ENCODE measurements at regions of chr17 and their contacts with region 1.

Region 1: DNA sequence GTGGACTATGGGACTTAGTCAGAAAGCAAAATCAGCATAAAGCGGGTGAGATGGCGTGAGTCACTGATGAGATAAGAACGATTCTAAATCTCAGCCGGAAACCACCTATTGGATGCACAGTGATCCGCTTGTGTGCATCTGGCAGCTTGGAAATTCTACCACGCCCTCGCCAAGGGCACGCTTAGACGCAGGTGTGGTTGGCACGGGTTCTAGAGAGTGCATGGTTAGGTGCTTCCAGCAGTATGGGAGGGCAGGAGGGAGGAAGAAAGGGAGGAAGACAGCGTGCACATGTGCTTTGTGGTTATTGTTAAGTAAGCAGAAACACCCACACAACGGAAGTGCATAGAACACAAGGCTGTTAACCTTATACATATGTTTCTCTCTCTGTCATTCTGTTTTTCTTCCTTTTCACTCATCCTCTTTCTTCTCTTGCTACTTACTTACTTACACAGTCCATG is 374.0 kb upstream of the ASIC2 start:
- DNase-seq: peak; percentile 60
- ATAC-seq: peak; percentile 91
- H3K4me3 Mint-ChIP-seq: no peak overlapping the region
- H3K27ac Mint-ChIP-seq: no peak overlapping the region
- H3K4me1 Mint-ChIP-seq: peaks cover 10% of the 10 kb centered on the region
- H3K27me3 Mint-ChIP-seq: peaks cover 7% of the 10 kb centered on the region

Region 2: GRCh38 chr17:33595828-33596227 is 71.3 kb before region 1 on chr17:
- CTCF ChIA-PET with region 1: no interaction called
- POLR2A ChIA-PET with region 1: no interaction called
- intact Hi-C with region 1: no loop called
- DNase-seq: no peak
- ATAC-seq: no peak
- H3K4me3 Mint-ChIP-seq: no peak overlapping the region
- H3K27ac Mint-ChIP-seq: no peak overlapping the region
- H3K4me1 Mint-ChIP-seq: no peaks in the 10 kb centered on the region
- H3K27me3 Mint-ChIP-seq: peaks cover 4% of the 10 kb centered on the region

Region 3: DNA sequence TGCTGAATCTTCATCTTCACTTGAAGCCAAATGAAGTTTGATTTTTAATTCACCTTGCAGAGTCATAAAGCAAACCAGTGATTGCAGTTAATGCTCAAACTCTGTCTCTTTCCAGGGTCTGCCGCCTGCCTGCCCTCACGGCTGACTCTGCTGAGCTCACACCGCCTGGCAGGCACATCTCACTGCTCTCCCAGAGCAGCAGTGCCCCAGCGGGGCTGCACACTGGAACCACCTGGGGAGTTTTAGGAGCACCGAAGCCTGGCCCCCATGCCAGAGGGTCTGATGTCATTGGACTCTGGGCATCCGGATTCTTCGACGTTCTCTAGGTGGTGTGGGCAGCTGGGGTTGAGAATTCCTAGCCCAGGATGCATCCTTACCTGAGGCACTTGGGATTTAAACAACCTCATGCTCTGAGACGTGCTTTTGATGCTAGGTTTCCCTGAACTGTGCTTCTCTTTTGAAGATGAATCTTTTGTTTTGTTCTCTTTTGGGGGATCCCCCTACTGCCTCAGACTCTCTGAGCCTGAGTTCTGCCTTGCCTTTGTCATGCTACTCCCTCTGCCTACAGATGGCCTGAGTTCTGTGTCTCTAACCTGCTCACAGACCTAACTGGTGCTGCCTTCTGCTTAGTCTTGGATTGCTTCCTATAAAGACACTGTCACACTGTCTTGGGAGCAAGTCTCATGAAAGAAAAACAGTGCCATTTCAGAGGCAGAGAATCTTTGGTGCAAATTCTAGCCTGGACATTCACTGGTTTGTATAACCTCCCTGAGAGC is 149.9 kb after region 1 on chr17:
- CTCF ChIA-PET with region 1: no interaction called
- POLR2A ChIA-PET with region 1: no interaction called
- intact Hi-C with region 1: no loop called
- DNase-seq: no peak
- ATAC-seq: no peak
- H3K4me3 Mint-ChIP-seq: no peak overlapping the region
- H3K27ac Mint-ChIP-seq: no peak overlapping the region
- H3K4me1 Mint-ChIP-seq: no peaks in the 10 kb centered on the region
- H3K27me3 Mint-ChIP-seq: peaks cover 9% of the 10 kb centered on the region

Region 4: DNA sequence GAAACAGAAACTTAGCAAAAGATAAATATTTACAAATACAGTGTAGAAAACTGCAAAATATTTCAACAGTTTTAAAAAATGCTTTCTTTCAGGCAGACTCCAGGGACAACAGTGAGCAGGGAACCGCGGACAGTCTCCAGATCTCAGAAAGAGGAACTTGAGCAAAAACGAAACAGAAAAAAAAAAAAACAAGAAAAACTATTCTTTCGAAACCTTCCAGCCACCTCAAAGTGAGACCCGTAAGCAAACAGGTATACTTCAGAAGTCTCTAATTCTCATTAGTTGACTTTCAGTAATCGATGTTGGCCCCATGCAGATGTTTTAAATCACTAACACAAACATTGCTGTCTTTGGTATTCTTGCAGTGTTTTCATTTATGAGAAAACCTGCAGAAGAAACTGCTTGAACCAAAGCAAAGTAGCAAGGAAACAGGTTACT is 711.6 kb after region 1 on chr17:
- CTCF ChIA-PET with region 1: no interaction called
- POLR2A ChIA-PET with region 1: no interaction called
- intact Hi-C with region 1: loop called in 1 of 2 experiments (anchors 10 kb)
- DNase-seq: peak; percentile 65
- ATAC-seq: peak; percentile 63
- H3K4me3 Mint-ChIP-seq: no peak overlapping the region
- H3K27ac Mint-ChIP-seq: no peak overlapping the region
- H3K4me1 Mint-ChIP-seq: peaks cover 56% of the 10 kb centered on the region
- H3K27me3 Mint-ChIP-seq: peaks cover 17% of the 10 kb centered on the region

Measured in activated CD4-positive, alpha-beta T cell treated with anti-CD3 and anti-CD28 coated beads for 36 hours (primary cell).